ENCODE measurements at regions of chr16 and their contacts with region 1.

Region 1: GRCh38 chr16:180938-181667 is 844 bp downstream of the HBQ1 start:
- DNase-seq: peak; percentile 73 to 91 (median 85)
- ATAC-seq: peak; percentile 96
- H3K4me3 ChIP-seq: peak overlapping the region; percentile 47
- H3K4me3 Mint-ChIP-seq: peak overlapping the region in 8 of 10 donors; percentile 30 to 69 (median 57)
- H3K27ac ChIP-seq: no peak overlapping the region
- H3K27ac Mint-ChIP-seq: no peak overlapping the region
- H3K4me1 ChIP-seq: peaks cover 3 to 9% of the 10 kb centered on the region in 2 donors
- H3K4me1 Mint-ChIP-seq: peaks cover 0 to 9% (median 4%) of the 10 kb centered on the region in 7 donors
- H3K27me3 ChIP-seq: peaks cover 20 to 23% of the 10 kb centered on the region in 2 donors
- H3K27me3 Mint-ChIP-seq: peaks cover 13 to 32% (median 19%) of the 10 kb centered on the region in 5 donors

Region 2: GRCh38 chr16:65671-66137 is 115.4 kb before region 1 on chr16:
- CTCF ChIA-PET with region 1: interaction called, 6 read pairs
- POLR2A ChIA-PET with region 1: interaction called, 4 read pairs
- intact Hi-C with region 1: loop called in 1 of 2 experiments (anchors 1 kb)
- DNase-seq: peak; percentile 67 to 89 (median 81)
- ATAC-seq: peak; percentile 91
- H3K4me3 ChIP-seq: no peak overlapping the region
- H3K4me3 Mint-ChIP-seq: no peak overlapping the region
- H3K27ac ChIP-seq: no peak overlapping the region
- H3K27ac Mint-ChIP-seq: peak overlapping the region in 1 of 9 donors; percentile 63
- H3K4me1 ChIP-seq: no peaks in the 10 kb centered on the region
- H3K4me1 Mint-ChIP-seq: peaks cover 0 to 8% (median 3%) of the 10 kb centered on the region in 7 donors
- H3K27me3 ChIP-seq: no peaks in the 10 kb centered on the region
- H3K27me3 Mint-ChIP-seq: peaks cover 0 to 20% (median 12%) of the 10 kb centered on the region in 5 donors

Region 3: GRCh38 chr16:106623-107324 is 74.3 kb before region 1 on chr16:
- CTCF ChIA-PET with region 1: interaction called, 9 read pairs
- POLR2A ChIA-PET with region 1: no interaction called
- intact Hi-C with region 1: loop called (anchors 1 to 2 kb)
- DNase-seq: peak in 8 of 9 donors; percentile 37 to 73 (median 64)
- ATAC-seq: peak; percentile 89
- H3K4me3 ChIP-seq: no peak overlapping the region
- H3K4me3 Mint-ChIP-seq: no peak overlapping the region
- H3K27ac ChIP-seq: no peak overlapping the region
- H3K27ac Mint-ChIP-seq: peak overlapping the region in 3 of 9 donors; percentile 6 to 62 (median 39)
- H3K4me1 ChIP-seq: no peaks in the 10 kb centered on the region
- H3K4me1 Mint-ChIP-seq: peaks cover 0 to 7% (median 4%) of the 10 kb centered on the region in 7 donors
- H3K27me3 ChIP-seq: no peaks in the 10 kb centered on the region
- H3K27me3 Mint-ChIP-seq: no peaks in the 10 kb centered on the region

Region 4: DNA sequence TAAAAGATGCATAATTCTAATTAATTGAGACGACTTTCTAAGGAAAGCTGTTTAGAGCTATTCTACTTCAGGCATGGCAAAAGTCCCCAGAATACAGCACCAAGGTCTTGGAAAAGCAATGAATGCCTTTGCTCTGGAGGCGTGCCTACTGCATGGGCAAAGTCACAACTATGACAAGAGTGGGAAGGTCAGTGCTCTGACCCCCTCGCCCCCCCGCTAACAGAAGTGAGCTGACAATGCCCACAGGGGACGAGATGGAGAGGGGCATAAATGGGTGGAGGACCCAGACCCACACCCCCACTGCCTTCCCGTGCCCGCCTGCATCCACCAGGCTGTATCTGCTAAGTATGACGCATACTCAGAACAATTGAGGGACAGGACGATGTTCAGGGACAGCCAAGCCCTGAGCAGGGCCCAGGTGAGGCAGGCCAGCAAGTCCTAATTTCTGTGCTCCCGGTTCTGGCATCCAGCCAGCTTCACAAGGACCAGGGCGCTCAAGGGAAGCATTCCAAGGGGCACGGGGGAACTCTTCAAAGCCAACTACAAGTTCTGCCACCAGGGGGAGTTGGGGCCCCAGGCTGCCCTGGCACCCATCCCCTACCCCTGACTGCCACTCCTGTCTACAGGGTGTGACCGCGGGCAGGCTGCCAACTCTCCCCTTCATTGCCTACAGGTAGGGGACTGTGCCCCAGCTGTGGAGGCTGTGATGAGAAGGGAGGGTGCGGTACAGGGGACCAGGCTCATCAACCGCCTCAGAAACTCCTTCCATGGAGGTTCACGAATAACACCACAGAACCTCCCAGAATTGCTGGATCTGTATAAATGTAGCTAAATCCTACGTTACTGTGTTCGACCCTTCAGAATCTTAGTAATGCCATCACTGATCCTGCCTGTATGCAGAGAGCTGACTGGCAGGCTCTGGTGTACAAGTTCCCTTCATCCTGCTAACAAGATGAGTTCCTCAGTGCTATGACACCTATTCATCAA is 63.4 kb before region 1 on chr16:
- CTCF ChIA-PET with region 1: interaction called, 8 read pairs
- POLR2A ChIA-PET with region 1: no interaction called
- intact Hi-C with region 1: loop called (anchors 1 to 2 kb)
- DNase-seq: peak; percentile 39 to 74 (median 63)
- ATAC-seq: peak; percentile 87
- H3K4me3 ChIP-seq: no peak overlapping the region
- H3K4me3 Mint-ChIP-seq: no peak overlapping the region
- H3K27ac ChIP-seq: no peak overlapping the region
- H3K27ac Mint-ChIP-seq: no peak overlapping the region
- H3K4me1 ChIP-seq: peaks cover 3 to 5% of the 10 kb centered on the region in 2 donors
- H3K4me1 Mint-ChIP-seq: peaks cover 0 to 6% (median under 1%) of the 10 kb centered on the region in 7 donors
- H3K27me3 ChIP-seq: no peaks in the 10 kb centered on the region
- H3K27me3 Mint-ChIP-seq: no peaks in the 10 kb centered on the region

Region 5: GRCh38 chr16:138049-138417 is 43.1 kb before region 1 on chr16:
- CTCF ChIA-PET with region 1: no interaction called
- POLR2A ChIA-PET with region 1: interaction called, 3 read pairs
- intact Hi-C with region 1: loop called in 1 of 2 experiments (anchors 2 kb)
- DNase-seq: peak in 7 of 9 donors; percentile 10 to 55 (median 23)
- ATAC-seq: peak; percentile 24
- H3K4me3 ChIP-seq: peak overlapping the region; percentile 58
- H3K4me3 Mint-ChIP-seq: peak overlapping the region; percentile 74 to 90 (median 84)
- H3K27ac ChIP-seq: peak overlapping the region; percentile 68
- H3K27ac Mint-ChIP-seq: peak overlapping the region in 7 of 9 donors; percentile 11 to 94 (median 75)
- H3K4me1 ChIP-seq: peaks cover 6% of the 10 kb centered on the region in 2 donors
- H3K4me1 Mint-ChIP-seq: peaks cover 9 to 47% (median 26%) of the 10 kb centered on the region in 7 donors
- H3K27me3 ChIP-seq: no peaks in the 10 kb centered on the region
- H3K27me3 Mint-ChIP-seq: peaks cover 0 to 6% (median 0%) of the 10 kb centered on the region in 5 donors

Region 6: DNA sequence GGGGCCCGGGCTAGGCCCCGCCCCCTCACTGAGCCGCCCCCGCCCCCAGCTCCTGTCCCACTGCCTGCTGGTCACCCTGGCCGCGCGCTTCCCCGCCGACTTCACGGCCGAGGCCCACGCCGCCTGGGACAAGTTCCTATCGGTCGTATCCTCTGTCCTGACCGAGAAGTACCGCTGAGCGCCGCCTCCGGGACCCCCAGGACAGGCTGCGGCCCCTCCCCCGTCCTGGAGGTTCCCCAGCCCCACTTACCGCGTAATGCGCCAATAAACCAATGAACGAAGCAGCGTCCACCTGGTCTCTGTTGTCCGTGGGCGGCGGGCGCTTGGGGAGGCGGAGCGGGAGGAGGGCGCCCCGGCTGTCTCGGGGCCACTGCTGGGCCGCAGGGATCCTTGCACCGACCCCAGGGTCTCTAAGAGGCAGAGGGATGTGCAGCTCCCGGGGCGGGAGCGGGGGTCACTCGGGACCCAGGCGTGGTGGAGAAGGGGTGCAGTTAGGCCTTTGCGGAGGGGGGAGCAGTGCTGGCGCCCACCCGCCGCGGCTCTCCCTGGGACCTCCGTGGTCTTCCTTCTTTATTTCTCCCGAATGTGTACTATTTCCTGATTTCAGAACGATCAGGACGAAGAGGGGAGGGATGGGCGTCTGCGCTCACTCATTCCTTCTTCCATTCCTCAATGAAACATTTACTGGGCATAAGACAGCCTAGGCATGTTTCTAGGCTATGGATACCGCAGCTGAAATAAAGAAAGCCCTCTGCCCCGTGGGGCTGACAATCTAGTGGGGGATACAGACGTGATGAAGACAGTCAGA is 26.7 kb before region 1 on chr16:
- CTCF ChIA-PET with region 1: interaction called, 4 read pairs
- POLR2A ChIA-PET with region 1: no interaction called
- intact Hi-C with region 1: loop called in 1 of 2 experiments (anchors 1 kb)
- DNase-seq: peak in 1 of 9 donors; percentile 47
- ATAC-seq: peak; percentile 22
- H3K4me3 ChIP-seq: peak overlapping the region; percentile 27
- H3K4me3 Mint-ChIP-seq: peak overlapping the region; percentile 69 to 86 (median 79)
- H3K27ac ChIP-seq: no peak overlapping the region
- H3K27ac Mint-ChIP-seq: peak overlapping the region in 4 of 9 donors; percentile 10 to 55 (median 44)
- H3K4me1 ChIP-seq: peaks cover 0 to 5% of the 10 kb centered on the region in 2 donors
- H3K4me1 Mint-ChIP-seq: peaks cover 5 to 8% (median 7%) of the 10 kb centered on the region in 7 donors
- H3K27me3 ChIP-seq: peaks cover 0 to 6% of the 10 kb centered on the region in 2 donors
- H3K27me3 Mint-ChIP-seq: peaks cover 28 to 51% (median 35%) of the 10 kb centered on the region in 5 donors

Region 7: DNA sequence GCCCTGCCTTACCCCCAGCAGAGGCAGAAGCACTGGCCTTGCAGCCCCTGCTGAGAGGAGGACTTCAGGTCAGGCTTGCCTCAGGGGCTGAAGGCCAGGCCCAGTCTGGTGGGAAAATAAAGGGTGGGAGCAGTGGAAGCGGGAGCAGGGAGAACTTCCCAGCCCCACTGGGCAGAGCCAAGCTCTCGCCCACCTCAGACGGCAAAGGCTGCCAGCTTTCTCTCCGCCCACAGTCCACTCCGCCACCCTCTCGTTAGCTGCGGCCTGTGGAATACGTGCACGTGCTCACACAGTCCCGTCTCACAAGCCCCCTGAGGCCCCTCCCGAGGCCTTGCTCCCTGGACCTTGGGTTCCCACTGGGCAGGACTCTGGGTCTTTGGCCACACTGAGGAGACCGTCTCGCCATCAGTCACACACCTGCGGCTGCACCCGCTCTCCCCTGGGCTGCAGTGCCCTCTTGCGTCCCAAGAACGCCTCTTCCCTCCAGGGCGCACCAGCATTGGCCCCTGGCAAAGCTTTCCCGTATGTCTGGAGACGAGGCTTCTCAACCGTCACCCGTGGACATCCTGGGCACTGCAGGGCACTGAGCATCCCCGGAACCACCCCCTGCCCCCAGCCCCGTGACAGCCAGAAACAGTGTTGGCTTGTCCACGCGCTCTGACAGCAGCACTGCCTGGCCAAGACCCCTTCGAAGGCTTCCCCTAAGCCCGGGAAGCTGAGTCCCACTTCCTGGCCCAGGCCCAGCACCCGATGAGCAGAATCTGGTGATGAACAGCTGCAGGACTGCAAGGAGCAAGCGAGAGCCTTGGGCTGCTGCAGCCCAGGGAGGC is 181.0 kb after region 1 on chr16:
- CTCF ChIA-PET with region 1: no interaction called
- POLR2A ChIA-PET with region 1: no interaction called
- intact Hi-C with region 1: loop called (anchors 1 to 2 kb)
- DNase-seq: peak; percentile 43 to 74 (median 70)
- ATAC-seq: peak; percentile 92
- H3K4me3 ChIP-seq: no peak overlapping the region
- H3K4me3 Mint-ChIP-seq: peak overlapping the region in 8 of 10 donors; percentile 12 to 77 (median 54)
- H3K27ac ChIP-seq: no peak overlapping the region
- H3K27ac Mint-ChIP-seq: peak overlapping the region in 7 of 9 donors; percentile 32 to 84 (median 69)
- H3K4me1 ChIP-seq: no peaks in the 10 kb centered on the region
- H3K4me1 Mint-ChIP-seq: peaks cover 0 to 12% (median 6%) of the 10 kb centered on the region in 7 donors
- H3K27me3 ChIP-seq: no peaks in the 10 kb centered on the region
- H3K27me3 Mint-ChIP-seq: peaks cover 0 to 4% (median 0%) of the 10 kb centered on the region in 5 donors